ENCODE measurements at regions of chr2 and their contacts with region 1.

Region 1: GRCh38 chr2:151409601-151410484 is at the start of gene RIF1:
- DNase-seq: peak; percentile 90 to 98 (median 92)
- ATAC-seq: peak; percentile 93
- H3K4me3 ChIP-seq: peak within 1 kb of the TSS; percentile 98
- H3K27ac ChIP-seq: peak within 1 kb of the TSS; percentile 96
- H3K4me1 ChIP-seq: peaks cover 6 to 16% of the 10 kb centered on the region in 2 experiments; a peak in 4 of 5 replicates
- H3K27me3 ChIP-seq: no peaks in the 10 kb centered on the region
- CTCF ChIP-seq: peak; percentile 48 to 79 (median 56)
- EP300 ChIP-seq: peak; percentile 45
- POLR2A ChIP-seq: peak; percentile 95
- RAD21 ChIP-seq: peak; percentile 23 to 52; a peak in 3 of 4 replicates
- polyA plus RNA-seq, gene RIF1: 11.0 to 15.4 TPM

Region 2: DNA sequence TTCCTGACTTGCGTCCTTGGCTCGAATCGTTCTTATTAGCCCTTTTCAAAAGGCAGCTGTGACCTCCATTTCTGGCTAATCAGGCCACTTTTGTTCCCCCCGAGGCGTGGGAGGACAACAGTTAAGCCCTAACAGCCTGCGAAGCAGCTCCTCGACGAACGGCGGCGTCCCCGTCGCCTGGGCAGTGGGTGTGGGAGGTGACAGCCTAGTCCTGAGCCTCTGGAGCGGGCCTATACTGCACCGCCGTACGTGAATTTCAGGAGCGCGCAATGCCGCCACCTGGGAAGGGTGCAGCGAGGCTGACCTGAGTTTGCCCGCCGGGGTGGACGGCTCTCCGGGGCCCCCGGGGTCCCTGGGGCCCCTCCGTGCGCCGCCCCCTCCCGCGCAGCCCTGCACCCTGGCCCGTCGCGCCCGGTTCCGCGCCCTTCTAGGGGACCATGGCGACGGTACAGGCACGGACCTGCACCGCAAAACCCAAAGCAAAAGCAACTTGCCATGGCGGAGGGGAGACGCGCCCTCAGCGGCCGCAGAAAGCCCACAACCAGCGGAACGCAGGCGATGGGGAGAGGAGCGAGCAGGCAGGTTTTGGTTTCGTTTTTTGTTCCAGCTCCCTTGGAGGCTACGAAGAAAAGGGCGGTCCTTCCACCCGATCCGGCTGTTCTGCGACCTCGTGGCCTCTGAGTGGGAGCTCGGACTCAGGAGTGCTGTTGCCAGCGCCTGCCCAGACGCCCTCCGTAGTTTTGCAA is 148.4 kb before region 1 on chr2 and contains the start of gene RBM43:
- CTCF ChIA-PET with region 1: no interaction called
- POLR2A ChIA-PET with region 1: interaction called, 4 read pairs
- in situ Hi-C with region 1: no loop called
- intact Hi-C with region 1: loop called (anchors 1 kb)
- DNase-seq: peak; percentile 90 to 93 (median 92)
- ATAC-seq: peak; percentile 93
- H3K4me3 ChIP-seq: peak within 1 kb of the TSS; percentile 66
- H3K27ac ChIP-seq: peak within 1 kb of the TSS; percentile 84
- H3K4me1 ChIP-seq: peaks cover 13 to 14% of the 10 kb centered on the region in 2 experiments
- H3K27me3 ChIP-seq: no peaks in the 10 kb centered on the region
- CTCF ChIP-seq: peak in 1 of 3 experiments; percentile 30; a peak in 1 of 6 replicates
- EP300 ChIP-seq: peak; percentile 71
- POLR2A ChIP-seq: peak; percentile 73
- RAD21 ChIP-seq: peak in 1 of 2 experiments; percentile 31; a peak in 2 of 4 replicates
- polyA plus RNA-seq, gene RBM43: 1.3 to 1.6 TPM

Region 3: GRCh38 chr2:151289369-151290088 is 120.3 kb before region 1 on chr2 and contains the start of gene NMI:
- CTCF ChIA-PET with region 1: no interaction called
- POLR2A ChIA-PET with region 1: no interaction called
- in situ Hi-C with region 1: no loop called
- intact Hi-C with region 1: loop called (anchors 1 kb)
- DNase-seq: peak; percentile 69 to 78 (median 73)
- ATAC-seq: peak; percentile 81
- H3K4me3 ChIP-seq: peak within 1 kb of the TSS; percentile 56
- H3K27ac ChIP-seq: peak within 1 kb of the TSS; percentile 93
- H3K4me1 ChIP-seq: peaks cover 14 to 22% of the 10 kb centered on the region in 2 experiments; a peak in 4 of 5 replicates
- H3K27me3 ChIP-seq: no peaks in the 10 kb centered on the region
- CTCF ChIP-seq: peak in 1 of 3 experiments; percentile 4; a peak in 1 of 6 replicates
- EP300 ChIP-seq: 0 out of 2 replicates have a peak, but pooled peaks have one; percentile 5
- POLR2A ChIP-seq: peak; percentile 70
- RAD21 ChIP-seq: 0 out of 4 replicates have a peak, but pooled peaks of 1 of the 2 experiments have one; percentile 3
- polyA plus RNA-seq, gene NMI: 29.7 to 36.4 TPM

Region 4: GRCh38 chr2:151357359-151357758 is 52.5 kb before region 1 on chr2 and contains the start of gene TNFAIP6:
- CTCF ChIA-PET with region 1: no interaction called
- POLR2A ChIA-PET with region 1: no interaction called
- in situ Hi-C with region 1: no loop called
- intact Hi-C with region 1: loop called (anchors 5 kb)
- DNase-seq: no peak
- ATAC-seq: peak; percentile 29; the same call in 1 of the 3 replicates
- H3K4me3 ChIP-seq: no peak within 1 kb of the TSS
- H3K27ac ChIP-seq: no peak within 1 kb of the TSS
- H3K4me1 ChIP-seq: peaks cover 0 to 3% of the 10 kb centered on the region in 2 experiments; a peak in 1 of 5 replicates
- H3K27me3 ChIP-seq: no peaks in the 10 kb centered on the region
- CTCF ChIP-seq: no peak
- EP300 ChIP-seq: no peak
- POLR2A ChIP-seq: no peak
- RAD21 ChIP-seq: no peak
- polyA plus RNA-seq, gene TNFAIP6: 0.08 to 0.28 TPM

Region 5: DNA sequence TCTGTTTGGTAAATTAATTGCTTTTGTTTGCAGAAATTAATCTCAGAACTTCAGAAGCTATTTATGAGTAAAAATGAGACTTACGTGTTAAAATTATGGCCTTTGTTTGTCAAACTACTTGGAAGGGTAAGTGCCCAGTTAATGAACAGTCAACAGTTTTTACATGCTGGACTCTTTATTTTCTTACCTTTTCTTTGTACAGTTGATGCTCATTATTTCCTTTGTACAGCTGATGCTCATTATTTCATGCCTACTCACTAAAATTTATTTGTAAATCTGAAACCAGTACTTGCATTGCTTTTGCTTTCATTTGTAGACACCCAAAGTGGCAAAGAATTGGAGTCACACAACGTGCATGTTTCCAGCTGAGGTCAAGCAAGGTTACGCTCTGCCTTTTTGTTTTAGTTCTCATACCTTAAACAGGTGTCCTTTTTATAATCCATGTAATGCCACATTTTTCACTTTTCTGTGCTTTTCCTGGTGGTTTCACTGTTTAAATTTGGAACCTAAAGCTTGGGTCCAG is 13.1 kb after region 1 on chr2:
- CTCF ChIA-PET with region 1: no interaction called
- POLR2A ChIA-PET with region 1: interaction called, 14 read pairs
- in situ Hi-C with region 1: no loop called
- intact Hi-C with region 1: no loop called
- DNase-seq: no peak
- ATAC-seq: no peak
- H3K4me3 ChIP-seq: no peak overlapping the region
- H3K27ac ChIP-seq: no peak overlapping the region
- H3K4me1 ChIP-seq: no peaks in the 10 kb centered on the region
- H3K27me3 ChIP-seq: no peaks in the 10 kb centered on the region; a peak in 1 of 5 replicates
- CTCF ChIP-seq: no peak
- EP300 ChIP-seq: no peak
- POLR2A ChIP-seq: no peak
- RAD21 ChIP-seq: no peak